Mammary epithelial cell (primary cell): ENCODE measurements at regions of chr10 and their contacts with region 1.

Region 1: DNA sequence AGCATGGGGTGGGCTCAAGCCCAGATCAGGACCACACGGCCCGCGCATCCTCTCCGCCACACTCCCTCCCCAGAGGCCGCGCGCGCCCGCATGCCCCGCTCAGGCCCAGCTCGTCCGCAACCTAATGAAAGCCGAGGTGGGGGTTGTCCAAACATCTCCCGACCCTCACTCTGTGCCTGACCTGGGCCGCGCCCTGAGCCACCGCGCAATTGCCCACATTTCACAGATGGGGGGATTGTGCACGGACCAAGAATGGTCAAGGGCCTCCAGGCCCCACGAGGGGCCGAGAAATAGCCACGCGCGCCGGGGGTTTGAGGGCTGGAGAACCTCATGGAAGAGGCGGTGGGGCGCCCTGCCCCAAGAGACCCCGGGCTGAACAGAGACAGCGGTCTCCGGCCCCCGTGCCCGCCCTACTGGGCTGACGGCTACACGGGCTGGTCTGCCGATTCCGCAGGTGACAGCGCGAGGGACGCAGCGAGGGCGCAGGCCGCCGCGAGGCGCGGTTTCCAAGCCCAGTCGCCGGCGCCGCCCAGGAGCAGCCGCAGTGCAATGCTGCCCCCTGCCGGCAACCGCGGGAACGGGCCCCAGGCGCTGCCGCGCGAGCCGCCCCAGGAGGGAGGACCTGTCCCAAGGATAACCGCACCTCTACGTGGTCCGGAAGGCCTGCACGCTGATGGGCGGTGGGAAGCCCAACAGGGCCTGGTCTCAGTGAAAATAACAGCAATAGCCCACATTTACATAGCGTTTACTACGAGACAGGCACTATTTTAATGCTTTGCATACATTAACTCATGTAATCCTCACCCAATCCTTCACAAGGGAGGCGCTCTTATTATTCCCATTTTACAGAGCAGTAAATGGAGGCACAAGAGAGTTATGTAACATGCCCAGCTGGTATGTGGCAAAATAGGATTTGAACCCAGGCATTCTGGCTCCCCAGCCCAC is 10.5 kb upstream of the GRID1 start:
- DNase-seq: peak; percentile 52
- H3K4me3 ChIP-seq: peak overlapping the region in 1 of 3 experiments; percentile 32
- H3K27ac ChIP-seq: no peak overlapping the region
- H3K4me1 ChIP-seq: peaks cover 4% of the 10 kb centered on the region
- H3K27me3 ChIP-seq: no peaks in the 10 kb centered on the region
- CTCF ChIP-seq: peak; percentile 89 to 93

Region 2: DNA sequence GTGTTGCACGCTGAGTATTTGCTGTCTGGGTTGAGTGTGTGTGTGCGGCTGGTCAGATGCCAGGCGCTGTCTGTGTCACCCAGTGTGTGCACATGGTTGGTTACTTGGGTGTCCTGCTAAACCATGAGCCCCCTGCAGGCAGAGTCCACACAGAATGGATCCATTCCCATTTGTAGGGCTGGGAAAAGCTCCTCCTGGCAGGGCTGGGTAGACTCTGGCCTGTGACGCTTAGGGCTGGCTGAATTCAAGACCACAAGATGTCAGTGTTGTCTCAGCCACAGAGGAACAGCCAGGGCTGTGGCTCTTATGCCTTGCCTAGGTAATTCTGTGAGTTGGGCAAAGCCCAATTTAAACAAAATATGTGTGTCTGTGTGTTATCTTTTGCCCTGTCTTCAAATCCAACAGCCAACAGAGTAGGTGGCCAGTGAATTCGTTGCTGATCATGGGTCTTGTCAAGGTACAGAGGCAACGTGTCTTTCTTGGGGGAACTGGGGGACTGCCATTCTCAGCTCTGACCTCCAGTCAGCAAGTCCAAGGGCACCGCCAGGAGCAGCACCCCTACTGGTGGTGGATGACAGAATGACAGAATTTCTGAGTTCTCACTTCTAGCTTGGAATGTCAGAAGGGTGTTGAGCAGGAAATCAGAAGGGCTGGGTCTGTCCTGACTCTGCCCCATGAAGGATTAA is 1763.6 kb before region 1 on chr10:
- CTCF ChIA-PET with region 1: no interaction called
- dilution Hi-C with region 1: no loop called
- in situ Hi-C with region 1: no loop called
- intact Hi-C with region 1: loop called (anchors 1 kb)
- DNase-seq: peak; percentile 51
- H3K4me3 ChIP-seq: no peak overlapping the region
- H3K27ac ChIP-seq: no peak overlapping the region
- H3K4me1 ChIP-seq: no peaks in the 10 kb centered on the region
- H3K27me3 ChIP-seq: no peaks in the 10 kb centered on the region
- CTCF ChIP-seq: peak; percentile 51 to 72

Region 3: GRCh38 chr10:84845624-84846261 is 1531.4 kb before region 1 on chr10:
- CTCF ChIA-PET with region 1: no interaction called
- dilution Hi-C with region 1: no loop called
- in situ Hi-C with region 1: no loop called
- intact Hi-C with region 1: loop called (anchors 5 kb)
- DNase-seq: no peak
- H3K4me3 ChIP-seq: no peak overlapping the region
- H3K27ac ChIP-seq: no peak overlapping the region
- H3K4me1 ChIP-seq: no peaks in the 10 kb centered on the region
- H3K27me3 ChIP-seq: peaks cover 5% of the 10 kb centered on the region
- CTCF ChIP-seq: peak; percentile 14 to 48

Region 4: GRCh38 chr10:85222300-85222699 is 1154.8 kb before region 1 on chr10:
- CTCF ChIA-PET with region 1: no interaction called
- dilution Hi-C with region 1: no loop called
- in situ Hi-C with region 1: no loop called
- intact Hi-C with region 1: loop called (anchors 2 kb)
- DNase-seq: no peak
- H3K4me3 ChIP-seq: no peak overlapping the region
- H3K27ac ChIP-seq: no peak overlapping the region
- H3K4me1 ChIP-seq: no peaks in the 10 kb centered on the region
- H3K27me3 ChIP-seq: no peaks in the 10 kb centered on the region
- CTCF ChIP-seq: no peak

Region 5: DNA sequence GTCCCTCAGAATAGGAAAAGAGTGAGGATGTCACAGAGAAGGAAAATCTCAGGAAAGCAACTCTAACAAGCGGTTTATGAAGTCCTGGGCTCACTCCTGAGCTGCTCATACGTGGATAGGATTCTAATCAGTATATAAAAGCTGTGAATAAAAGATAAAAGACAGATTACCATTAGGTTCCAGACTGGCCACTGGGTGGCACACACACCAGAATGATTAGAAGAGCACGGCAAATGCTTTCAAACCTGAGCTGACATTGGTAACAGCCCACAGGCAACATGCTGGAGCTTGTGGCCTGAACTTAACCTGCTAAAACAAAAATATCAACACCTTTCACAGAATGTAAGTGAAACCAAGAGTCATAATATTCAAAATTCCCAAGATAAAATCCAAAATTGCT is 381.3 kb before region 1 on chr10:
- CTCF ChIA-PET with region 1: no interaction called
- dilution Hi-C with region 1: no loop called
- in situ Hi-C with region 1: no loop called
- intact Hi-C with region 1: loop called (anchors 5 kb)
- DNase-seq: peak; percentile 26
- H3K4me3 ChIP-seq: no peak overlapping the region
- H3K27ac ChIP-seq: no peak overlapping the region
- H3K4me1 ChIP-seq: no peaks in the 10 kb centered on the region
- H3K27me3 ChIP-seq: no peaks in the 10 kb centered on the region
- CTCF ChIP-seq: peak; percentile 45 to 53

Region 6: GRCh38 chr10:86079088-86079487 is 298.0 kb before region 1 on chr10:
- CTCF ChIA-PET with region 1: no interaction called
- dilution Hi-C with region 1: no loop called
- in situ Hi-C with region 1: no loop called
- intact Hi-C with region 1: no loop called
- DNase-seq: no peak
- H3K4me3 ChIP-seq: no peak overlapping the region
- H3K27ac ChIP-seq: no peak overlapping the region
- H3K4me1 ChIP-seq: no peaks in the 10 kb centered on the region
- H3K27me3 ChIP-seq: no peaks in the 10 kb centered on the region
- CTCF ChIP-seq: no peak

Region 7: GRCh38 chr10:86285136-86285790 is 91.9 kb before region 1 on chr10:
- CTCF ChIA-PET with region 1: no interaction called
- dilution Hi-C with region 1: no loop called
- in situ Hi-C with region 1: no loop called
- intact Hi-C with region 1: no loop called
- DNase-seq: no peak
- H3K4me3 ChIP-seq: no peak overlapping the region
- H3K27ac ChIP-seq: no peak overlapping the region
- H3K4me1 ChIP-seq: no peaks in the 10 kb centered on the region
- H3K27me3 ChIP-seq: no peaks in the 10 kb centered on the region
- CTCF ChIP-seq: no peak

Region 8: GRCh38 chr10:86535057-86535882 is 158.1 kb after region 1 on chr10:
- CTCF ChIA-PET with region 1: no interaction called
- dilution Hi-C with region 1: no loop called
- in situ Hi-C with region 1: no loop called
- intact Hi-C with region 1: no loop called
- DNase-seq: no peak
- H3K4me3 ChIP-seq: peak overlapping the region in 2 of 3 experiments; percentile 26 to 42
- H3K27ac ChIP-seq: no peak overlapping the region
- H3K4me1 ChIP-seq: peaks cover 4% of the 10 kb centered on the region
- H3K27me3 ChIP-seq: peaks cover 2% of the 10 kb centered on the region
- CTCF ChIP-seq: no peak